Sciatic nerve (tissue), 2 donors: ENCODE measurements at regions of chr2 and their contacts with region 1.

Region 1: GRCh38 chr2:11863513-11864328 is 117.3 kb downstream of the LPIN1 start:
- DNase-seq: peak; percentile 91
- ATAC-seq: peak; percentile 94

Region 2: DNA sequence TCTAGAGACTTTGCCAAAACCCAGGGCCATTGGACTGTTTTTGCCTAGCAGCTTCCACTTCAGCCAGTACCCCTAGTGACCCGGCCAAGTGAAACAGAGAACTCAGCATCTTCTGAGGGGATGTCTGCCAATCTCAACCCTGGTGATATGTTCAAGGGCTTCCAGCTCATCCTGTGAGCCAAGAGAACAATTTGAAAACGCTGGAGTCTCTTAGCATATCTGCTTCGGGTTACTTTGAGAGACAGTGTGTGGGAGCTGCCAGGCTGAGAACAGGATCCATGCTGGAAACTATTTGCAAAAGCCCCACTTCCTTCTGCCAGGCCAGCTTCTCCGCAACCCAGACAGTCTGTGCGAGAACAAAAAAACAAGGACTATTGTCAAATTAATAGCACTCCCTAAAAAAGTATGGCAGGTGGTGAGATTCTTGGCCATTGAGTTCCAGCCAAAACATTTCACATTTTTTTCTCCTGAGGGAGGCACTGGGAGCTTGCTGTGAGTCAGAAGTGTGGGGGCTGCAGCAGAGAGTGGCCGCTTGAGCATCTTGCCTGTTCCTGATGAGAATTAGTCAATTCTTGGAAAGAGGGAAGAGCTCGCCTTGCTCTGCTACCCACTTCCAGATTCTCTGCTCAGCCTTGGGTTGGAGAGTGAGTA is 457.4 kb after region 1 on chr2:
- intact Hi-C with region 1: loop called (anchors 10 kb)
- DNase-seq: no peak
- ATAC-seq: peak; percentile 89

Region 3: GRCh38 chr2:12716282-12717190 is 852.8 kb after region 1 on chr2 and contains the start of gene TRIB2:
- intact Hi-C with region 1: loop called (anchors 5 kb)
- DNase-seq: peak; percentile 91
- ATAC-seq: peak; percentile 72
- total RNA-seq, gene TRIB2: 184 TPM